ENCODE measurements at regions of chr3 and their contacts with region 1.

Region 1: DNA sequence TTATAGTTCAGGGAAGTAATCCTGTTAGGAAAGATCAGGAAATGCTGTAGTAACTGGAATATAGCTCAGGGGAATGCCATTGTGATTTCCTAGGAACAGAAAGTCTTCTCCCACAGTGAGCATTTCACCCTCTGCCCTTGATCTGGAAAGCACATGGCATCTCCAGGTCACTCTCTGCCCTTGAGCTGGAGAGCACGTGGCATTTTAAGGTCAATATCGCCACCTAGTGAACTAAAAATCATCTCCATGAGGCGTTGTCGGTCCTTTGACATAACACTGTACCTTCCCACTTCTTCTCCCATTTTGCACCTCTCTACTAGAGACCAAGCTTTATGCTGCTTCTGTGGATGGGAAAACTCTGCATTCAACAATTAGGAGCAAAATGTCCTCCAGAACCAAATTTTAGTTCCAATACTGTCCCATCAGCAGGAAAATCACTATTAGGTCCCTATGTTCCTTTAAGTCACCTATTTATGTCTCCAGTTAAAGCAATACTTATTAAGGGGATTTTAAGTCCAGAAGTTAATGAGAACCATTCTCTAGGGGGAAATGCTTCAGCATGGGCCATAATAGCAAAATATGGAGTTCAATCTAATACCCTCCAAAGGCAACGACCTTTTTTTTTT is 54.7 kb upstream of the GK5 start:
- DNase-seq: peak; percentile 89
- H3K4me3 Mint-ChIP-seq: no peak overlapping the region
- H3K27ac Mint-ChIP-seq: no peak overlapping the region
- H3K4me1 Mint-ChIP-seq: peaks cover 30% of the 10 kb centered on the region
- H3K27me3 Mint-ChIP-seq: no peaks in the 10 kb centered on the region
- CTCF ChIP-seq: peak; percentile 68

Region 2: DNA sequence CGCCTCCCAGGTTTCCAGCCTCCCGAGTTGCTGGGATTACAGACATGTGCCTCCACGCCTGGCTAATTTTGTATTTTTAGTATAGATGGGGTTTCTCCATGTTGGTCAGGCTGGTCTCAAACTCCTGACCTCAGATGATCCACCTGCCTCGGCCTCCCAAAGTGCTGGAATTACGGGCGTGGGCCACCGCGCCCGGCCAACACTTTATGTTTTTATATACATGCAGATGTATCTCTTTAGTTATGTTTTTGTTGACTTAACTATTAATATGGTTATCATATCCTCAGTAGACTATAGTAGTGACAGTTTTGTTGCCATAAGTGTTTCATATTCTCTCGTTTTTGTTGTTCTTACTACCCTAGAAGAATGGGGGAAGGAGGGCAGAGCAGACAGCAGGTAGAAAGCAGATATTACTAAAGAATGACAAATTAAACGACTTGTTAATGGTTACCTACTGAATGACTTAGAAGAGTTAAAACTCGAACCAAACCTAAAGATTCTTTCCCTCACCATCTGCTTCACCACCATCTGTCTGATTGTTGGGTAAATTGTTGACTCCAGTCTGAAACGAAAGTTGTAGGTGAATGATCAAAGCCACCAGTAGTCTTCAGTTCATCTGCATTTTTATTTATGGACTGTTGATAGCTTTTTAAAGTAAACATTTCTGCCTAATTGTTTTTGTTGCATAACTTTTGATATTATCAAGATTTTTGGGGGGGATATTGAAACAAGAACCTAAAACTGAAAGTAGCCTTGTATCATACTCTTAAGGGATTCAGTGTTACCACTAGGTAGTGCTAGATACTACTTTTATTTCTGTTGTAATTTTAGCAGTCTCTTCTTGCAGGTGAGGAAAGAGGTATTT is 704.0 kb before region 1 on chr3:
- CTCF ChIA-PET with region 1: interaction called, 3 read pairs
- POLR2A ChIA-PET with region 1: no interaction called
- intact Hi-C with region 1: loop called (anchors 10 kb)
- DNase-seq: peak; percentile 8
- H3K4me3 Mint-ChIP-seq: no peak overlapping the region
- H3K27ac Mint-ChIP-seq: peak overlapping the region; percentile 44
- H3K4me1 Mint-ChIP-seq: peaks cover 9% of the 10 kb centered on the region
- H3K27me3 Mint-ChIP-seq: no peaks in the 10 kb centered on the region
- CTCF ChIP-seq: peak; percentile 42

Region 3: GRCh38 chr3:142022381-142022780 is 257.7 kb before region 1 on chr3:
- CTCF ChIA-PET with region 1: no interaction called
- POLR2A ChIA-PET with region 1: interaction called, 4 read pairs
- intact Hi-C with region 1: loop called (anchors 1 kb)
- DNase-seq: no peak
- H3K4me3 Mint-ChIP-seq: no peak overlapping the region
- H3K27ac Mint-ChIP-seq: no peak overlapping the region
- H3K4me1 Mint-ChIP-seq: peaks cover 13% of the 10 kb centered on the region
- H3K27me3 Mint-ChIP-seq: no peaks in the 10 kb centered on the region
- CTCF ChIP-seq: no peak

Region 4: GRCh38 chr3:142129516-142130171 is 150.4 kb before region 1 on chr3:
- CTCF ChIA-PET with region 1: interaction called, 74 read pairs
- POLR2A ChIA-PET with region 1: interaction called, 9 read pairs
- intact Hi-C with region 1: loop called (anchors 1 kb)
- DNase-seq: no peak
- H3K4me3 Mint-ChIP-seq: no peak overlapping the region
- H3K27ac Mint-ChIP-seq: no peak overlapping the region
- H3K4me1 Mint-ChIP-seq: no peaks in the 10 kb centered on the region
- H3K27me3 Mint-ChIP-seq: no peaks in the 10 kb centered on the region
- CTCF ChIP-seq: no peak

Region 5: DNA sequence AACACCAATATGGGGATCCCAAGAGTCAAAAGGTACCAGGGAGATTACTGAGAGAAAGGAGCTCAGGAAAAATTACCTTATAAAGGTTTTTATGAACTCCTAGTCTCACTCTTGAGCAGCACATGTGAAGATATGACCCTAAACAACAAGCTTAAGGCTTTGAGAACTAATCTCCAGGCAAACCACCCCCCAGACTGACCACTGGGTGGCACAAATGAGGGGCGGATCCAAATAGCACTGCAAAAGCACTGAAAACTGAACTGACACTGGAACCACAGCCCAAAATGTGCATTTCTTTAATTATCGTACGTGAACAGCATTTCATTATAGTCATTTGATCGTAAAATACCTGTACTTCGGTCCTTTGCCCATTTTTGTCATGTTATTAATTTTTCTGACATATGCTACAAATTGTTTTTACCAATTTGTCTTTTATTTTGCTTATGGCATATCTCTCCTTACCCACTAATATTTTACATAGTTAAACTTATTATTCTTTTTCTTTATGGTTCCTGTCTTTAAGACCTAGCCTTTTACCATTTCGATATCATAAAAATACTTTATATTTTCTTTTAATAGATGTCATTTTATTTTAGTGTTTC is 99.2 kb before region 1 on chr3:
- CTCF ChIA-PET with region 1: interaction called, 70 read pairs
- POLR2A ChIA-PET with region 1: interaction called, 4 read pairs
- intact Hi-C with region 1: loop called (anchors 1 kb)
- DNase-seq: peak; percentile 48
- H3K4me3 Mint-ChIP-seq: no peak overlapping the region
- H3K27ac Mint-ChIP-seq: no peak overlapping the region
- H3K4me1 Mint-ChIP-seq: no peaks in the 10 kb centered on the region
- H3K27me3 Mint-ChIP-seq: no peaks in the 10 kb centered on the region
- CTCF ChIP-seq: peak; percentile 35

Region 6: GRCh38 chr3:142226484-142226883 is 53.6 kb before region 1 on chr3:
- CTCF ChIA-PET with region 1: interaction called, 7 read pairs
- POLR2A ChIA-PET with region 1: interaction called, 4 read pairs
- intact Hi-C with region 1: loop called (anchors 1 kb)
- DNase-seq: no peak
- H3K4me3 Mint-ChIP-seq: peak overlapping the region; percentile 87
- H3K27ac Mint-ChIP-seq: no peak overlapping the region
- H3K4me1 Mint-ChIP-seq: peaks cover 13% of the 10 kb centered on the region
- H3K27me3 Mint-ChIP-seq: no peaks in the 10 kb centered on the region
- CTCF ChIP-seq: no peak

Measured in MCF 10A (cell line).